PC-9 (cell line): ENCODE measurements at regions of chr17 and their contacts with region 1.

Region 1: GRCh38 chr17:36524428-36524876 is 10.2 kb downstream of the MYO19 start:
- DNase-seq: peak; percentile 9 to 42
- H3K4me3 ChIP-seq: no peak overlapping the region
- H3K27ac ChIP-seq: no peak overlapping the region
- H3K4me1 ChIP-seq: no peaks in the 10 kb centered on the region
- H3K27me3 ChIP-seq: no peaks in the 10 kb centered on the region
- CTCF ChIP-seq: no peak

Region 2: DNA sequence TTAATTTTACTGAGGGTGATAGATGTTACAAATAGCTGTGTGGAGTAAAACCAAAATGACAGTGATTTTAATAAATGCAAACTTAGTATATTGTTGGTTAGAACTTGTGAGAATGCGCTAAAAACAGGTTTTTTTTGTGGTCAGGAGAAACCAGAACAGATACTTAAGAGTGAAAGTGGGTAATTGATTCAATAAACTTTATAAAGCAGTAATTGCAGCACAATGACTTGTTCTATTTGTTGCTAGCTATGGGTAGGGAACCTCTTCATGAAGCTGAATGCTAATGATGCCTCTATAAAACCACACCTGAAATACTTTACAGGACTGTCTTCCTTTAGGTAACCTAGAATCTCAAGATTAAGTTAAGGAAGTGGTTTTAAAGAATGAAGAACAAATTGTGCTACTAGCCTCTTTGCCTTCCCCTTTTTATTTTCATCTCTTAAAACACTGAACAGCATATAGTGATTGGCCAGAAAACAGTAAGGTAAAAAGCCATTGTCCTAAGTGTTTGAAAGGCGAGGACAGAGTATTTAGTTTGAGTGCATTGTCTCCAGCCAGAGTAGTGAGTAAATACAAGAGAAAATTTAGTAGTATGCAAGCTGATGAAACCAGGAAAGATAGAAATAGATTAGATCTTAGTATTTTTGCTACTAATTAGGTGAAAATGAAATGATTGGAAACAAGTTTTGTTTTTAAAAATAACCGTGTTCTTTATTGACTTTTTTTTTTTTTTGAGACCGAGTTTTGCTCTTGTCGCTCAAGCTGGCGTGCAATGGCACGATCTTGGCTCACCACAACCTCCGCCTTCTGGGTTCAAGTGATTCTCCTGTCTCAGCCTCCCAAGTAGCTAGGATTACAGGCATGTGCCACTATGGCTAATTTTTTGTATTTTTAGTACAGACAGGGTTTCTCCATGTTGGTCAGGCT is 26.3 kb after region 1 on chr17:
- CTCF ChIA-PET with region 1: no interaction called
- POLR2A ChIA-PET with region 1: interaction called, 17 read pairs
- intact Hi-C with region 1: no loop called
- DNase-seq: no peak
- H3K4me3 ChIP-seq: no peak overlapping the region
- H3K27ac ChIP-seq: 0 out of 2 replicates have a peak overlapping the region, but pooled peaks have one; percentile 7
- H3K4me1 ChIP-seq: peaks cover 17% of the 10 kb centered on the region
- H3K27me3 ChIP-seq: no peaks in the 10 kb centered on the region
- CTCF ChIP-seq: no peak

Region 3: GRCh38 chr17:36728030-36728991 is 203.9 kb after region 1 on chr17:
- CTCF ChIA-PET with region 1: no interaction called
- POLR2A ChIA-PET with region 1: no interaction called
- intact Hi-C with region 1: no loop called
- DNase-seq: no peak
- H3K4me3 ChIP-seq: no peak overlapping the region
- H3K27ac ChIP-seq: no peak overlapping the region
- H3K4me1 ChIP-seq: no peaks in the 10 kb centered on the region
- H3K27me3 ChIP-seq: peaks cover 64% of the 10 kb centered on the region
- CTCF ChIP-seq: no peak